Endothelial cell of umbilical vein (primary cell): ENCODE measurements at regions of chr17 and their contacts with region 1.

Region 1: GRCh38 chr17:29116804-29117772 is 63.1 kb downstream of the MYO18A start:
- DNase-seq: peak; percentile 61
- H3K4me3 ChIP-seq: no peak overlapping the region
- H3K27ac ChIP-seq: no peak overlapping the region
- H3K4me1 ChIP-seq: no peaks in the 10 kb centered on the region
- H3K27me3 ChIP-seq: no peaks in the 10 kb centered on the region
- CTCF ChIP-seq: peak; percentile 85 to 93
- POLR2A ChIP-seq: no peak

Region 2: GRCh38 chr17:28644985-28645939 is 471.8 kb before region 1 on chr17 and contains the start of gene BLTP2:
- CTCF ChIA-PET with region 1: interaction called, 14 read pairs
- POLR2A ChIA-PET with region 1: no interaction called
- dilution Hi-C with region 1: no loop called
- intact Hi-C with region 1: no loop called
- DNase-seq: peak; percentile 95
- H3K4me3 ChIP-seq: peak within 1 kb of the TSS; percentile 54 to 77 (median 71)
- H3K27ac ChIP-seq: peak within 1 kb of the TSS; percentile 36
- H3K4me1 ChIP-seq: peaks cover 23% of the 10 kb centered on the region
- H3K27me3 ChIP-seq: no peaks in the 10 kb centered on the region
- CTCF ChIP-seq: no peak
- POLR2A ChIP-seq: peak; percentile 93
- total RNA-seq, gene BLTP2: 164 and 165 TPM in 2 replicates

Region 3: DNA sequence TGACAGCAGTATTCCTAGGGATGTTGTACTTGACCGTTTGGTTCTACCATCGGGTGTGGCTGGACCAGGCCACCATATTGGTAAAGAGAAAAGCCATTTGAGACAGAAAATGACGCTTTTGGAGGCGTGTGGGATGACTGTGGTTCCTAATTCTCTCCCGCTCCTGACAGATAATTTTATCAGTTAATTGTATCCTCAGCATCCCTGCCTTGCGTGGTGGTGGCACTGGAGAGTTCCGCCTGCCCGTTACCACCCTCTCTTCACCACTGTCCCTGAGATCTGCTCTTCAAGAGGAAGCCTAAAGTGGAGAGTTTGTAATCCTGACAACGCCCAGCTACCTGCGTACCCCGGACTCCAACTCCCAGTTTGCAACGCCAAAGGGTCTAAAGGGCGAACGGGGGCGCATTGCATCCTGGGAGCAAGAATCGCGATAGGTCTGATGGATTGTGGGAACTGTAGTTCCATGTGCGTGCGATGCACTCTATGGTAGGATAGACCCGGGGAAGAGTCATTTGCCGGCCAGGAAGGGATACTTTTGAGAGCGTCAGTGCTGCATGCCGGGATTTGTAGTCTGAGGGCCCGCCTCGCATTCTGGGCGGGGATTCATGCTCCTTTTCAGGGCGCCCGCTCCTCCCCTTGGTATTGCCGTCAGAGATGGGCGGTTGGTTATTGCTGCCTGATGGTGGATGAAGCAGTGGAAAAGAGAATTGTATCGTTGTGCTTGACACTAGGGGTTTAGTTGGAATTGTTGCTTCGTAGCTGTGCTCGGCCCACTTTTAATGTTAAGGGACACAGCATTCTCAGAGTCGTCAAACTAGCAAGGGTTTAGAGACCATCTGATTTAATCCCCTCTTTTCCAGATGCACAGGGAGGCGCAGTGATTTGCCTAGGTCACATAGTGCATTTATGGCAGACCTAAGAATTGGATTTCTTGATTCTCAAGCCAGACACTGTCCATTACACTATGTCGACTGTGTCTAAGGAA is 164.8 kb before region 1 on chr17:
- CTCF ChIA-PET with region 1: interaction called, 1,079 read pairs
- POLR2A ChIA-PET with region 1: no interaction called
- dilution Hi-C with region 1: no loop called
- intact Hi-C with region 1: no loop called
- DNase-seq: peak; percentile 100
- H3K4me3 ChIP-seq: peak overlapping the region in 2 of 3 experiments; percentile 65 to 72
- H3K27ac ChIP-seq: peak overlapping the region; percentile 80
- H3K4me1 ChIP-seq: peaks cover 17% of the 10 kb centered on the region
- H3K27me3 ChIP-seq: no peaks in the 10 kb centered on the region
- CTCF ChIP-seq: no peak
- POLR2A ChIP-seq: peak; percentile 17

Region 4: DNA sequence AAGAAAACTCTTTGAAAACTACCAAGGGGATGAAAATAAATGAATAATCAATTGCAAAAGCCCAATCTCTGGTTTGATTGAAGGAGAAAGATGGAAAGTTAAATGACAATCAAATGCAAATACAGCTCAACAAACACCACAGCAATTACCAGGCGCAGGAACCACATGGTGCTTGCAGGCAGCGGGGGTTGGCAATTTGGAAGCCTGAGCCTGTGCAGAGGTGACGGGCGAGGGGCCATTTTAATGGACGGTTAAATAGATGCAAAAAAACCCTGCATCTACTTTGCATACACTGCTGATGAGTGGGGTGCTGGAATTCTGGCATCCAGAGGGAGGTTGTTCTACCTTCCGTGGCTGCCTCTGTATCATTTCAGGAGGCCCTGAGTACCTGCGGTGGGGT is 106.5 kb before region 1 on chr17:
- CTCF ChIA-PET with region 1: interaction called, 11 read pairs
- POLR2A ChIA-PET with region 1: no interaction called
- dilution Hi-C with region 1: no loop called
- intact Hi-C with region 1: no loop called
- DNase-seq: no peak
- H3K4me3 ChIP-seq: no peak overlapping the region
- H3K27ac ChIP-seq: no peak overlapping the region
- H3K4me1 ChIP-seq: no peaks in the 10 kb centered on the region
- H3K27me3 ChIP-seq: peaks cover 32 to 41% of the 10 kb centered on the region in 2 experiments
- CTCF ChIP-seq: no peak
- POLR2A ChIP-seq: no peak

Region 5: GRCh38 chr17:29063992-29064391 is 53.1 kb before region 1 on chr17:
- CTCF ChIA-PET with region 1: interaction called, 13 read pairs
- POLR2A ChIA-PET with region 1: no interaction called
- dilution Hi-C with region 1: no loop called
- intact Hi-C with region 1: no loop called
- DNase-seq: peak; percentile 18
- H3K4me3 ChIP-seq: no peak overlapping the region
- H3K27ac ChIP-seq: no peak overlapping the region
- H3K4me1 ChIP-seq: no peaks in the 10 kb centered on the region
- H3K27me3 ChIP-seq: peaks cover 0 to 4% of the 10 kb centered on the region in 2 experiments
- CTCF ChIP-seq: no peak
- POLR2A ChIP-seq: no peak

Region 6: DNA sequence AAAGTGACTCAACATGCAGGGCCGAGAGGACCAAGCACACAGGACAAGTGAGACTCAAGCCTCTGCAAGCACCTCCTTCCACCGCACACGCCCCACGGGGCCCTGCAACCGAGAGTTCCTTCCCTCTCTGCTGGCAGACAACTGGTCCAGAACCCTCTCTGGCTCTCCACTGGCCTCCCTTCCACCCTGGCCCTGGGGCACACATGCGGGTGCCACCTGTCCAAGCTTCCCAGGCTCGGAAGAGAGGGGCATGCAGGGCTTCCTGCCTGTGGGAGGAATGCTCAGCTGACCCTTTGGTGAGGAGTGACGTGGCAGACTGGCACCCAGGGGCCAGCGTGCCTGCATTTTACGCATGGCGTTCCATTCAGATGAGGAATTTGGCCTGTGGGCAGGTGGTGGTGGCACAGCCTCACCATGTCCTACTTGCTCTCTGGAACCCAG is 14.3 kb before region 1 on chr17:
- CTCF ChIA-PET with region 1: interaction called, 35 read pairs
- POLR2A ChIA-PET with region 1: no interaction called
- dilution Hi-C with region 1: no loop called
- intact Hi-C with region 1: no loop called
- DNase-seq: no peak
- H3K4me3 ChIP-seq: no peak overlapping the region
- H3K27ac ChIP-seq: no peak overlapping the region
- H3K4me1 ChIP-seq: no peaks in the 10 kb centered on the region
- H3K27me3 ChIP-seq: no peaks in the 10 kb centered on the region
- CTCF ChIP-seq: no peak
- POLR2A ChIP-seq: no peak

Region 7: DNA sequence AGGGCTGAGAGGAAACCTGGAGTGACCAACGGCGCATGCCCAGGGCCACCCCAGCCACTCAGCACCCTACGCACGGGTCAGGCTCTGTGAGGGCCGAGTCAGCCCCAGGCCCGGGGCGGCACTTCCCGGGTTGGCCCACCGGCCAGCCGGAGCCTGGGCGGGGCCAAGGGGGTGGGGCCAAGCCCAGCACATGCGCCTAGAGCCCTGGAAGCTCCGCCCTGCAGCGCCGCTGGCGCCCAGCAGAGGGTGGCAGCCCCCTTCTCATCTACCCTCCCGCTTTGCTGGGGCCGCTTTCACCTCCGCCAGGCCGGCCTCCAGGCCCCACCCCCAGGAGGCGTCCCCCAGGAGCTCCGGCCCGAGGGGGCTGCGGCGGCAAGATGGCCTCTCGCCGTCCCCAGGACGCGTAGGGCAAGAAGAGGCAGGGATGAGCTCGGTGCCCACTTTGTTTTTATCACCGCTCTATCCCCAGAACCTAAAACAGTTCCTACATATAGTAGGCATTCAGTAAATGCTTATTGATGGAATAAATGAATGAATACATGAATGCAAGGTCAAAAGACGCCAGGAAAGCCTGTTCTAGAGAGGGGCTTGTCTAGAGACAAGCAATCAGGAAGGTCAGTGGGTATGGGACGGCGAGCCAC is 31.8 kb after region 1 on chr17:
- CTCF ChIA-PET with region 1: interaction called, 29 read pairs
- POLR2A ChIA-PET with region 1: no interaction called
- dilution Hi-C with region 1: no loop called
- intact Hi-C with region 1: no loop called
- DNase-seq: peak; percentile 95
- H3K4me3 ChIP-seq: peak overlapping the region; percentile 28 to 74 (median 31)
- H3K27ac ChIP-seq: peak overlapping the region; percentile 53
- H3K4me1 ChIP-seq: peaks cover 18% of the 10 kb centered on the region
- H3K27me3 ChIP-seq: no peaks in the 10 kb centered on the region
- CTCF ChIP-seq: peak; percentile 96 to 97
- POLR2A ChIP-seq: peak; percentile 83